Activated CD8-positive, alpha-beta T cell treated with anti-CD3 and anti-CD28 coated beads for 36 hours (primary cell): ENCODE measurements at regions of chr16 and their contacts with region 1.

Region 1: GRCh38 chr16:84555418-84556195 is 51.1 kb upstream of the MEAK7 start:
- DNase-seq: no peak
- ATAC-seq: no peak
- H3K4me3 Mint-ChIP-seq: no peak overlapping the region
- H3K27ac Mint-ChIP-seq: no peak overlapping the region
- H3K4me1 Mint-ChIP-seq: peaks cover 29% of the 10 kb centered on the region
- H3K27me3 Mint-ChIP-seq: no peaks in the 10 kb centered on the region
- CTCF ChIP-seq: no peak

Region 2: DNA sequence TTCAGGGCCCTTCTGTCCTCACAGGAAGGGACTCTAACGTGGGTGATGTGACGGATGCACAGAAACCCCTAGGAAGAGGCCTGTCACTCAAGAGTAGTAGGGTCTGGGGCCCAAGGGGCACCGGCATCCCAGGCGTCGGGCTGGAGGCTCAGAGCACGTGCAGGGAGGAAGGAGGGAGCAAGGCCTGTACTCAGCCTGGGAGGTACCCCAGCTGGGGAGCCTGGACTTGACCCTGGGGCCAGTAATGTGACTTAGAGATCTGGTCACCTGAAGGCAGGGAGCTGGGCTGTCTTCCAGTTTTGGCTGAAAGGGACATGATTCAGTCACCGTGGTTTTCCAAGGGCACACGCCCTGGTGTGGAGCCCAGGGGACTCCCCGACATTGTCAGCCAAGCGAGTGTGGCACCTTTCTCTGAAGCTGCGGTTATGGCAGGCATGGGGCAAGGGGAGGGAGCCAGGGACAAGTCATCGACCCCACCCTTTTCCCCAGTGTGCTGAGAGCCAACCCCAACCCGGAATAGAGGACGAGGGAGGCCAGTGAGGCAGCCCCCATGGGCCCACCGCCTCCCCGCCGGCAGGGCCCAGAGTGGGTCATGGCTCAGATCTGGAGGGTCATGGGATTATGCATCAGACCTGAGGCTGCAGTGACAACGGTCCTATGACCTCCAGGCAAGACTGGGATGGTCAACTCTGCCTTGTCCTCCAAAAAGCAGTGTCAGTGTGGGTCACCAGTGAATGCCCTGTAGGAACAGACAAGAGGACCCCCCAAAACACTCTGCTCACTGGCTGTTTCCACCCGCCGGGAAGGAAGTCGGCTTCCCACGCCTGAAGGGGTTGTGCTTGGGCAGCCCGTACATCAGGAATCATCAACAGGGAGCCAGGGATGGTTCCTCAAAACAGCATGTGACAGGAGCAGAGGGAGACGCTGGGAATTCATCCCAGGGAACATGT is 93.1 kb before region 1 on chr16:
- CTCF ChIA-PET with region 1: no interaction called
- POLR2A ChIA-PET with region 1: no interaction called
- intact Hi-C with region 1: no loop called
- DNase-seq: no peak
- ATAC-seq: no peak
- H3K4me3 Mint-ChIP-seq: no peak overlapping the region
- H3K27ac Mint-ChIP-seq: no peak overlapping the region
- H3K4me1 Mint-ChIP-seq: no peaks in the 10 kb centered on the region
- H3K27me3 Mint-ChIP-seq: no peaks in the 10 kb centered on the region
- CTCF ChIP-seq: no peak

Region 3: GRCh38 chr16:84518748-84519341 is 36.8 kb before region 1 on chr16:
- CTCF ChIA-PET with region 1: interaction called, 11 read pairs
- POLR2A ChIA-PET with region 1: interaction called, 11 read pairs
- intact Hi-C with region 1: no loop called
- DNase-seq: peak; percentile 90
- ATAC-seq: peak; percentile 59
- H3K4me3 Mint-ChIP-seq: peak overlapping the region; percentile 57
- H3K27ac Mint-ChIP-seq: peak overlapping the region; percentile 89
- H3K4me1 Mint-ChIP-seq: peaks cover 64% of the 10 kb centered on the region
- H3K27me3 Mint-ChIP-seq: no peaks in the 10 kb centered on the region
- CTCF ChIP-seq: peak; percentile 30

Region 4: GRCh38 chr16:84599521-84600202 is 44.1 kb after region 1 on chr16:
- CTCF ChIA-PET with region 1: interaction called, 4 read pairs
- POLR2A ChIA-PET with region 1: interaction called, 8 read pairs
- intact Hi-C with region 1: loop called (anchors 5 kb)
- DNase-seq: peak; percentile 93
- ATAC-seq: peak; percentile 61
- H3K4me3 Mint-ChIP-seq: peak overlapping the region; percentile 83
- H3K27ac Mint-ChIP-seq: peak overlapping the region; percentile 100
- H3K4me1 Mint-ChIP-seq: peaks cover 92% of the 10 kb centered on the region
- H3K27me3 Mint-ChIP-seq: no peaks in the 10 kb centered on the region
- CTCF ChIP-seq: no peak